Left ventricle myocardium inferior (tissue), 1 donor: ENCODE measurements at regions of chr3 and their contacts with region 1.

Region 1: DNA sequence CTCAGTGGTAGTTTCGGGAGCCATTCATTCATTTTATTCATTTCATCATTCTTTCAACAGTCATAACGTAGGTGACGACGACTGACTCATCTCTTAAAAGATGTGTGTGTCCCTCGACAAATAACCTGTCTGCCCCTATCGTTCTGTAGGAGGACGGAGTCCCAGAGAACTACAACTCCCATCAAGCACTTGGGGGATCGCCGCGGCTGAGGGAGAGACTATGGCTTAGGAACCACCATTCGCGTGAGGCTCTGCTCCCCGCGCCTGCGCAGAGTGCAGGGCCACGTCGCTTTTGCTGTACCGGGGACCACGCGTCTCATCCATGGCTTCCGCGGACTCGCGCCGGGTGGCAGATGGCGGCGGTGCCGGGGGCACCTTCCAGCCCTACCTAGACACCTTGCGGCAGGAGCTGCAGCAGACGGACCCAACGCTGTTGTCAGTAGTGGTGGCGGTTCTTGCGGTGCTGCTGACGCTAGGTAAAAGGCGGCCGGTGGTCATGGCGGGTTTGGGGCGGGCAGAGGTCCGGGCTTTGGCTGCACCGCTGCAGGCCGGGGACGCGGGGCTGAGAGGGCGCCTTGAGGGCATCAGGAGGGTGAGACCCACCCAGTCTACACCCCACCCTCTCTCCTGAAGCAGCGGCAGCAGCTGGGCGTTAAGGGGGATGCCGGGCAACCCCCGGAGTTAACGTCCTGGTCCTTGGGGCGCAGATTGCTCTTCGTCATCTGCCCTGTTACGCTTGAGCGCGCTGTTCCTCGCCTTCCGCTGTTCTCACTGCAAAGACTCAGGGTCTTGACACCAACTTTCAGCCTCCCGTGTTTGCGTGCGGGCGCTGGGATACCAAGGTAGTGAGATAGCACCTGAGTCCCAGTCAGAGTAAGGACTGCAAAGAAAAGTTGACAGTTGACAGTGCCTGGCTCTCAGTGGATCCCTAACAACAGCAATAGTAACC is at the start of gene SRPRB:
- DNase-seq: peak; percentile 95
- H3K4me3 ChIP-seq: peak within 1 kb of the TSS; percentile 91
- H3K27ac ChIP-seq: peak within 1 kb of the TSS; percentile 84
- H3K4me1 ChIP-seq: peaks cover 21% of the 10 kb centered on the region
- H3K27me3 ChIP-seq: no peaks in the 10 kb centered on the region
- CTCF ChIP-seq: no peak
- total RNA-seq, gene SRPRB: 26.0 TPM

Region 2: DNA sequence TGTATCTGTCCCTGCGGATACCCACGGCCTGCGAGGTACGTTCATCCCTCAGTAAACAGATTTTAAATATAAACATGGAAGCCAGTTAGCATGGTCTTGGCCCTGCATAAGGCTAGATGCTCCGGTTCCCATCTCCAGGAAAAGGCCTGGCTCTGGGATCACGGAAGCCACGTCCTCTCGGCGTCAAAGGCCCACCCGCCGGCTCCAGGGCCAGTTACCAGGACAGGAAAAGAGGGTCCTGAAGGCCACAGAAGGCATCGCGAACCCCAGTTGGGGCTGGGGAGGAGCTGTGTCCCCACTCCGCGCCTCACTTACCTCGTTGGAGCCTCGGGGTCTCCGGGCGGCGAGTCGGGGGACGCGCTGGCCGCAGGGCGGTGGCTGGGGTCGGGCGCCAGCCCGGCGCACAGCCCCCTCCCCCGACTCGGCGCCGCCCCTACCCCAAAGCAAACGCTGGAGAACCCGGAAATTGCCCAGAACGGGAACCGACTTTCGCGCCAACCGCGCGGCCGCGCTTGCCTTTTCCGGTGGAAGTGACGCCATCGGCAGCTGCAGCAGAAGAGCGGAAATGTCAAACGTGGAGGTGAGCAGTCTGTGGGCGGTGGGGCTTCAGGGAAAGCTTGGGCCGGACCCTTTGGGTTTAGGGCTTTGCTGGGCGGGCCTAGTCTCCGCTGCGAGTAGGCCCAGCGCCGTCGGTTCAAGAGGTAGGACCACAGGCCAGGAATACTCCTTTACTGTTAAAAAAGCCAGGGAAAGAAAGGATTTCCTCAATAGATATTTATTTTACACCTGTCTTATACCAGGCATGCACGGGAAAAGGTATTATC is 144.1 kb before region 1 on chr3 and contains the start of gene TOPBP1:
- intact Hi-C with region 1: loop called (anchors 10 kb)
- DNase-seq: peak; percentile 82
- H3K4me3 ChIP-seq: peak within 1 kb of the TSS; percentile 85
- H3K27ac ChIP-seq: peak within 1 kb of the TSS; percentile 84
- H3K4me1 ChIP-seq: peaks cover 27% of the 10 kb centered on the region
- H3K27me3 ChIP-seq: no peaks in the 10 kb centered on the region
- CTCF ChIP-seq: no peak
- total RNA-seq, gene TOPBP1: 10.4 TPM